ENCODE measurements at regions of chr11 and their contacts with region 1.

Region 1: GRCh38 chr11:15182372-15182771 is 67.6 kb downstream of the INSC start:
- DNase-seq: no peak
- H3K4me3 Mint-ChIP-seq: no peak overlapping the region
- H3K27ac Mint-ChIP-seq: no peak overlapping the region
- H3K4me1 Mint-ChIP-seq: no peaks in the 10 kb centered on the region
- H3K27me3 Mint-ChIP-seq: peaks cover 9% of the 10 kb centered on the region
- CTCF ChIP-seq: no peak

Region 2: GRCh38 chr11:15127341-15127740 is 55.0 kb before region 1 on chr11:
- CTCF ChIA-PET with region 1: interaction called, 10 read pairs
- intact Hi-C with region 1: no loop called
- DNase-seq: no peak
- H3K4me3 Mint-ChIP-seq: no peak overlapping the region
- H3K27ac Mint-ChIP-seq: no peak overlapping the region
- H3K4me1 Mint-ChIP-seq: no peaks in the 10 kb centered on the region
- H3K27me3 Mint-ChIP-seq: peaks cover 45% of the 10 kb centered on the region
- CTCF ChIP-seq: no peak

Region 3: DNA sequence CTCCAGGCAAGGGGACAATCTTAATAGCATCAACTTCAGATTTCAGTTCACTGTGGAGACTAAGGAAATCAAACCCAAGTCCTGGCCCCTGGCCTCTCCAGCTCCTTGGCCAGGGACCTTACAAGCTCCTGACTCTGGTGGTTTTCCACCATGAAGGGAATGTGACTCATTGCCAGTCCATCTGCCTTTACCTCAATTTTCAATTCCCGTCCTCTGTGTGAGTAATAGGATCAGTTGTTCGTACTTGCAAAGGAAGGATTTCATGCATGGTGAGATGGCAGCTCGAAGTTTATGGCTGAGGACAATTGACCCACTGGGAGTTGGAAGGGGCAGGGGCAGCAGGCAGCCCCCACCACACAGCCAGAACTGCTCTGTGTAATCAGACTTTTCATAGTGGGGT is 25.2 kb before region 1 on chr11:
- CTCF ChIA-PET with region 1: no interaction called
- intact Hi-C with region 1: no loop called
- DNase-seq: no peak
- H3K4me3 Mint-ChIP-seq: no peak overlapping the region
- H3K27ac Mint-ChIP-seq: no peak overlapping the region
- H3K4me1 Mint-ChIP-seq: peaks cover 6% of the 10 kb centered on the region
- H3K27me3 Mint-ChIP-seq: peaks cover 28% of the 10 kb centered on the region
- CTCF ChIP-seq: no peak

Region 4: DNA sequence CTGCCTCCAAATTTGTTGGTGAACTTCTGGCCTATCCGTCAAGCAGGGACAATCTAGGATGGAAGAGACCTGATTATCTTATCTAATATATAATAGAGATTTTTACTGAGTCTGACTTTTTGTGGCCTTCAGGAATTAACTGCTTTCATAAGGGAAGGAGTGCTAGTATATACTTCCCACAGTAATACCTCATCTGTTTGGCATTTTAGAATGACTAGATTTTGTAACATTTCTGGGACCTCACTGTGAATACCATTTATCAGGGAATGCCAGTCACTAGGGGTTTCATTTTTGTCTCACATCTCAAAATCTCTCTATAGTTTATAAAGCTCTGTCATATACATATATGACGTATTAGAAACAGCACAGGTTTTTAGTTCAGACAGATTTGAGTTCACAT is 46.7 kb after region 1 on chr11:
- CTCF ChIA-PET with region 1: no interaction called
- intact Hi-C with region 1: no loop called
- DNase-seq: no peak
- H3K4me3 Mint-ChIP-seq: no peak overlapping the region
- H3K27ac Mint-ChIP-seq: no peak overlapping the region
- H3K4me1 Mint-ChIP-seq: no peaks in the 10 kb centered on the region
- H3K27me3 Mint-ChIP-seq: peaks cover 39% of the 10 kb centered on the region
- CTCF ChIP-seq: no peak

Measured in Calu3 (cell line).